PC-9 (cell line): ENCODE measurements at regions of chr7 and their contacts with region 1.

Region 1: DNA sequence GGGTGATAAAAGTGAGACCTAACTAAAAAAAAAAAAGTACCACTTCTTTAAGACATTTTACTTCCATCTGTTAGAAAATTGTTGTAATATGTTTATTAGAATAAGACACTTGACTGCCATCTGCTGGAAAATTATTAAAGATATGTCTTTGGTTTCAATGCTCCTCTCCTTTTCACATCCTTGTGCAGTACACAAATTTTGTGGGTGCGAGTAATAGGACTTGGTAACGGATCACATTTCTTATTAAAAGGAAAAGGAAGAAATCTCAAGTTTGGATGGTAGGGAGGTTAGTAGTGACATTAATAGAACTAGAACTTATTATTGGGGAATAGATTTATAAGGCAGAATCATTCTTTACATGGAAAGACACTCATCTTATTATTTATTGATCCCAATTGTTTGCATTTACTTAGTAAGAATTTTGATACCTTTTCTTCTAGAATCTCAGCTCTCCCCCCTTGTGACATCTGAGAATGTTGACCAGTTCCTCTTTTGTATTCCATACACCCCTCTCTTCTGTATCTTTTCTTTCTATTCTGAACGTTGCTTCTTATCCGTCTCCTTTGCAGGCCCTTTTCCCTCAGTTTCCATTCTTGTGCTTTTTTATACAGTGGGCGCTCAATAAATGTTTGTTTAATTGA is 43.1 kb upstream of the RPA3 start:
- DNase-seq: peak in 1 of 2 experiments; percentile 54
- H3K4me3 ChIP-seq: no peak overlapping the region
- H3K27ac ChIP-seq: no peak overlapping the region
- H3K4me1 ChIP-seq: peaks cover 43% of the 10 kb centered on the region
- H3K27me3 ChIP-seq: no peaks in the 10 kb centered on the region
- CTCF ChIP-seq: peak; percentile 59; the same call in 1 of the 2 replicates

Region 2: DNA sequence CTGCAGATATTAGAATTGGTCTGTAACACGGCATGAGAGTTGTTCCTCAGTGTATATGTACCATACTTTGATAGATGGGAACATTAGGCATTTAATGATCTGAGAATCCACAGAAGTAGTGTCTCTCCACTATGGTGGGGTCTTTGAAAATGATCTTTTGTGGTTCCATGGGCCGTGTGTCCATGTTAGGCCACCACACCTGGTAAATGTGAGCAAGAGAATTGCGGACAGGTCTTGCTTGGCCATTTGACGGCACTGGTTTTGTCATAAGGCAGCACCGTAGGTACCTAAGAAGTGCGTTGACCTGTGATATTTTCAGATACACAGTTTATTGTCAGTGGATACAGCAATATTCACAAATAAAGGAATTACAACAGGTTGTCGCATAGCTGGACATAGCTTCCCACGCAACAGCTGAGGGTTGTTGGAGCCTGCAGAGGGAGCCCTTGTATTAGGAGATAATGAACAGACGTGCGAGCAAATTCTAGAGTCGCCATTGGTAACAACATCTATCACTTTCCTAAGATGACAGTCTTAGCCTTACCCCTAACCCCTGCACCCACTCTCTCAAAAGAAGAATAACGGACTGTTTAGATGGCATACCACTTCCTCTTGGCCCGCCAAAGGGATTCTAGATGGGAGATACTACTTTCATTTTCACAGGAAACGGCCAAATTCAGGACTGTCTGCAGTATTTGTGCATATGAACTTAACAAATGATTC is 337.1 kb before region 1 on chr7:
- CTCF ChIA-PET with region 1: no interaction called
- POLR2A ChIA-PET with region 1: no interaction called
- intact Hi-C with region 1: loop called (anchors 10 kb)
- DNase-seq: peak; percentile 55 to 60
- H3K4me3 ChIP-seq: peak overlapping the region; percentile 29; the same call in 1 of the 2 replicates
- H3K27ac ChIP-seq: no peak overlapping the region
- H3K4me1 ChIP-seq: no peaks in the 10 kb centered on the region
- H3K27me3 ChIP-seq: no peaks in the 10 kb centered on the region
- CTCF ChIP-seq: peak; percentile 88

Region 3: GRCh38 chr7:7595451-7595850 is 166.0 kb before region 1 on chr7:
- CTCF ChIA-PET with region 1: no interaction called
- POLR2A ChIA-PET with region 1: no interaction called
- intact Hi-C with region 1: no loop called
- DNase-seq: no peak
- H3K4me3 ChIP-seq: no peak overlapping the region
- H3K27ac ChIP-seq: no peak overlapping the region
- H3K4me1 ChIP-seq: no peaks in the 10 kb centered on the region
- H3K27me3 ChIP-seq: no peaks in the 10 kb centered on the region
- CTCF ChIP-seq: peak; percentile 77

Region 4: DNA sequence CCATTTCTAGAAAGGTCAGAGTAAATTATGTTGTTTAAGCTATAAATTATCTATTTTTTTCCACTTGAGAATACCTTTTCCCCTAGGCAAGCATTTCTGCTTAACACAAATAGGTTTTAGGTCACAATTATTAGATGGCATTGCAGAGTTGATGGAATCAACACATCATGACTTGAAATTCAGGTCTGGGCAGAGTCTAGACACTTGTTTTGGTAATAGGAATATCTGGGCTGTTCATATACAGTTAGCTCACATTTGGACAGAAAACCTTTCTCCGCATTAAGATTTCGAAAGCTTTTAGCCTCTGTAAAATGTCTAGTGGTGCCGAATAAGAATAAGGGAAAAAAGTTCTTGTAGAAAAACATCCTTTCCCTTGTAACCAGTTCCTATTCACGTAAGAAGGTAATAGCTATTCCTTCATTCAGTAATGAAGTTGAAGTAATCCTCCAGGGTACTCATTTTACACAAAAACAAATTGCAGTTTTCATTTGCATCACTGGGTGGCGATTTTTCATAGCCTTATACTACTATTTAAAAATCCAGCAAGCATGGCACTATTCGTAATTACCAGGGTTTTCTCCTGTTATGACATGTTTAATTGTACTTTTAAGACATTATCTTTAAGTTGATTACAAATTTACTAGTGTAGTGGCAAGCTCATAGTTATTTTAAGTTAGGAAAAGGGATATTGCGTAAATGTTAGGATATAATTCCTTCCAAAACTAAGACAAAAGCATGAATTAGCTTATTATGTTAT is 80.1 kb before region 1 on chr7:
- CTCF ChIA-PET with region 1: interaction called, 11 read pairs
- POLR2A ChIA-PET with region 1: no interaction called
- intact Hi-C with region 1: loop called (anchors 2 kb)
- DNase-seq: peak; percentile 29 to 82
- H3K4me3 ChIP-seq: peak overlapping the region; percentile 11; the same call in 1 of the 2 replicates
- H3K27ac ChIP-seq: peak overlapping the region; percentile 38
- H3K4me1 ChIP-seq: peaks cover 28% of the 10 kb centered on the region
- H3K27me3 ChIP-seq: no peaks in the 10 kb centered on the region
- CTCF ChIP-seq: peak; percentile 84

Region 5: GRCh38 chr7:7732566-7733290 is 28.7 kb before region 1 on chr7:
- CTCF ChIA-PET with region 1: no interaction called
- POLR2A ChIA-PET with region 1: no interaction called
- intact Hi-C with region 1: no loop called
- DNase-seq: no peak
- H3K4me3 ChIP-seq: no peak overlapping the region
- H3K27ac ChIP-seq: no peak overlapping the region
- H3K4me1 ChIP-seq: peaks cover 4% of the 10 kb centered on the region; the same call in 1 of the 2 replicates
- H3K27me3 ChIP-seq: no peaks in the 10 kb centered on the region
- CTCF ChIP-seq: no peak

Region 6: DNA sequence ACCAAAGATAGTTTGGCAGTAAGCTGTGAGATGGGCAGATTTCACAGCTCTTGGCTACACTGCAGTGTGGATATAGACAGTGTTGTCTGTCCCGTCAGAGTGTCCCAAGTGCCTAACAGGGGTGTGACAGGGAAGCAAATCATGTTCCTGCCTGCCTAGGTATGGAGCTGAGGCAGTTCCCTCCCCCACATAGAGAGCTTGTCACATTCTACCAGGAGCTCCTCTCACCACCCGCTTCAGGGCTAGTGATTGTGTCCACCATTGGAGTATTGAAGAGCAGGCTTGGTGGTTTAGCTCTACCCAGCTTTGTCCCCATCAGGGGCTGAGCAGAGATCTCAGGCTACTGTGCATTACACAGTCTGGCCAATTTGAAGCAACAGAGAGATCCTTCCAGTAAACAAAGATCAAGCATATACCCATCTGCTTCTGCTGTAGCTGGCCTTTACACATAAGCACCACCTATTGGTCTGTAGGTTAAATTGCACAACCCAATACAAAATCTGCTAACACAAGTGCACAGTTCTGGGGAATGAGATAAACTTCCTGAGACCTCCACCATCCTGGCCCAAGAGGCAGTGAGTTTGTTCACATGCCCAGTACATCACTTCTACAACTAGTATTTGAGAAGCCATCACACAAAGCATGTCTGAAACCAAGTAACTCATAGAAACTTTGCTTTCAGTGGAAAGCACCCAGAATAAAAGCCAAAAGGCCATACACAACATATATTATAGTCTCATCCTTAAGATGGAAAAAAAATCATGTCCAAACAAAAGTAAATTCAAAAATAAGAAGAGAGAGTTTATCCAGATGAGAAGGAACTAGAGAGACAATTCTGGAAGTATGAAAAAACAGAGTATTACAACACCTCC is 274.4 kb after region 1 on chr7:
- CTCF ChIA-PET with region 1: no interaction called
- POLR2A ChIA-PET with region 1: no interaction called
- intact Hi-C with region 1: loop called (anchors 5 kb)
- DNase-seq: no peak
- H3K4me3 ChIP-seq: no peak overlapping the region
- H3K27ac ChIP-seq: no peak overlapping the region
- H3K4me1 ChIP-seq: no peaks in the 10 kb centered on the region
- H3K27me3 ChIP-seq: no peaks in the 10 kb centered on the region
- CTCF ChIP-seq: peak; percentile 69

Region 7: GRCh38 chr7:8217200-8218068 is 456.0 kb after region 1 on chr7:
- CTCF ChIA-PET with region 1: no interaction called
- POLR2A ChIA-PET with region 1: no interaction called
- intact Hi-C with region 1: loop called (anchors 10 kb)
- DNase-seq: peak; percentile 8 to 59
- H3K4me3 ChIP-seq: no peak overlapping the region
- H3K27ac ChIP-seq: no peak overlapping the region
- H3K4me1 ChIP-seq: peaks cover 7% of the 10 kb centered on the region; the same call in 1 of the 2 replicates
- H3K27me3 ChIP-seq: no peaks in the 10 kb centered on the region
- CTCF ChIP-seq: peak; percentile 94